Endothelial cell of umbilical vein (primary cell): ENCODE measurements at regions of chr18 and their contacts with region 1.

Region 1: GRCh38 chr18:11688989-11689668 is at the start of gene GNAL:
- DNase-seq: peak; percentile 60
- H3K4me3 ChIP-seq: peak within 1 kb of the TSS; percentile 2 to 34 (median 31)
- H3K27ac ChIP-seq: no peak within 1 kb of the TSS
- H3K4me1 ChIP-seq: peaks cover 11% of the 10 kb centered on the region
- H3K27me3 ChIP-seq: peaks cover 4 to 21% of the 10 kb centered on the region in 2 experiments
- CTCF ChIP-seq: no peak
- POLR2A ChIP-seq: no peak
- total RNA-seq, gene GNAL: 0.65 and 0.73 TPM in 2 replicates

Region 2: DNA sequence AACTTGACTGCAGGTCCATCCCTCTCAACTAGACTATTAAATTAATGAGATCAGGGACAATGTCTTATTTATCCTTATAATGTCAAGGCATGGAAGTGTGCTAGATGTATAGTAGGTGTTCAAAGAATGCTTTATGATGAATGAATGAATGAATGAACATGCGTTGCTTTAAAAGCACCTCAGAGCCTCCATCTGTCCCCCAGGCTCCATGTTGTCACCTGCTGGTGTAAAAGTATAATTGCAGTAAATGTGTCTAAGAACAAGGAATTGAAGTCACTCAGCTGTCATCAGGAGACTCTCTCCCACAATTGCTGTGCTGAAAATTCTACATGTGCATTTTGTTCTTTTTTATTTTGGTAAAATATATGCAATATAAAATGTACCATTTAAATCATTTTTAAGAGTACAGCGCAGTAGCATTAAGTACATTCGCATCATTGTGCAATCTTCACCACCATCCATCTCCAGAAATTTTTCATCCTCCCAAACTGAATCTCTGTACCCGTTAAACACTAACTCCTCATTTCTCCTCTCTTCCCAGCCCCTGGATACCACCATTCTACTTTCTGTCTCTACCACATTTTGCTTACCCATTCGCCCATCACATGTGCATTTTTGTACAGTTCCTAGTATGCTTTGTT is 52.5 kb after region 1 on chr18:
- CTCF ChIA-PET with region 1: no interaction called
- POLR2A ChIA-PET with region 1: no interaction called
- dilution Hi-C with region 1: no loop called
- intact Hi-C with region 1: loop called (anchors 10 kb)
- DNase-seq: no peak
- H3K4me3 ChIP-seq: no peak overlapping the region
- H3K27ac ChIP-seq: no peak overlapping the region
- H3K4me1 ChIP-seq: no peaks in the 10 kb centered on the region
- H3K27me3 ChIP-seq: peaks cover 5% of the 10 kb centered on the region in 2 experiments
- CTCF ChIP-seq: peak; percentile 20 to 44
- POLR2A ChIP-seq: no peak

Region 3: GRCh38 chr18:11947214-11948191 is 258.4 kb after region 1 on chr18:
- CTCF ChIA-PET with region 1: no interaction called
- POLR2A ChIA-PET with region 1: no interaction called
- dilution Hi-C with region 1: no loop called
- intact Hi-C with region 1: loop called (anchors 1 kb)
- DNase-seq: peak; percentile 97
- H3K4me3 ChIP-seq: peak overlapping the region; percentile 43 to 60 (median 57)
- H3K27ac ChIP-seq: peak overlapping the region; percentile 95
- H3K4me1 ChIP-seq: peaks cover 11% of the 10 kb centered on the region
- H3K27me3 ChIP-seq: no peaks in the 10 kb centered on the region
- CTCF ChIP-seq: no peak
- POLR2A ChIP-seq: peak; percentile 27

Region 4: DNA sequence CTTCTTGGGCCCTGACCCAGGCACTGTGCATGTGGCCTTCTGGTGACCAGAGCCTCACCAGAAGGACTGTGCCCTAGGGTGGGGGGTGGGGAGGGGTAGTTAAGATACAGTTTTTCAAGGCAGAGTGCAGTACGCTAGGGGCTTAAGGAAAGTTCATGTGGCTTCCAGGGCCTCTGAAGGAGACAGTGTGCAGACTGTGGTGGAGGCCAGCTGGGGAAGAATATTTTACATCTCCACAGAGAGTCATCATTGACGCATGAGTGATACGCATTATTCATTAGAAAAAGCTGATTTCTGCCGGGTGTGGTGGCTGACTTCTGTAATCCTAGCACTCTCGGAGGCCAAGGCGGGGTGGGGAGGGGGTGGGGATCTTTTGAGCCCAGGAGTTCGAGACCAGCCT is 287.7 kb after region 1 on chr18:
- CTCF ChIA-PET with region 1: no interaction called
- POLR2A ChIA-PET with region 1: no interaction called
- dilution Hi-C with region 1: no loop called
- intact Hi-C with region 1: no loop called
- DNase-seq: no peak
- H3K4me3 ChIP-seq: no peak overlapping the region
- H3K27ac ChIP-seq: no peak overlapping the region
- H3K4me1 ChIP-seq: peaks cover 9% of the 10 kb centered on the region
- H3K27me3 ChIP-seq: no peaks in the 10 kb centered on the region
- CTCF ChIP-seq: no peak
- POLR2A ChIP-seq: no peak